ENCODE measurements at regions of chr13 and their contacts with region 1.

Region 1: DNA sequence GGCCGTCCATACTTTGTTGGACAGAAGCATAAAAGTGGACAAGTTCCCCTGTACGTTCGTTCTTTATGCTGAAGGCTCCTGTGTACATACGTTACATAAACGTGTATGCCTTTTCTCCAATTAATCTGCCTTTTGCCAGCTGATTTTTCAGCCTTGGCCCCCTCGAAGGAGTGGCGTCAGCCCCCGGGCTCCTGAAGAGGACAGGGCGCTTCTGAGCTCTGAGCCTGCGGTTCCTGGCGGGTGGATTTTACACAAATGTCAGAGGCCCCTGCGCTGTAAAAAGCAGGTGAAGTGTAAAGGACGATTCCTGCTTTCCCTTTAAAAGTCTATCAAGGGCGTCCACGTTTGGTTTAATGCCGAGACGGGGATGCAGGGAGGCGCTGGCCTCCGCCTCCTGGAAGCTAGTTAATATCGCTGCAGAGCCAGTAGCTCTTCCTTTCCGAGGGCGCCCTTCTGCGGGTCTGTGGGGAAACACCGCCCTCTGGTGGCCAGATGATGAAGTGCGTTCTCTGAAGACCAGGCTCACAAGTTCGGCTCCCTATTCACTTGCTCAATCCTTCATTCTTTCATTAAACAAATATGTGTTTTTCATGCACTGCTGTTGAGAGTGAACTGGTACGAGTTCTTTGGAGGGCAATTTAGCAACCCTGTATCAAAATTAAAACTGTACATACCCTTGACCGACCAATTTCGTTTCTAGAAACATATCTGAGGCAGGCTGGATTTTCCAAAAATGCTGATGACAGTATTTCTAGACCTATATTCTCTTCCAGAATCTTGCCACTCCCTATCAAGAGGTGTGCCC is 62.0 kb downstream of the GPR12 start:
- DNase-seq: peak; percentile 72 to 91 (median 87)
- H3K4me3 ChIP-seq: no peak overlapping the region
- H3K27ac ChIP-seq: no peak overlapping the region
- H3K4me1 ChIP-seq: no peaks in the 10 kb centered on the region
- H3K27me3 ChIP-seq: no peaks in the 10 kb centered on the region
- CTCF ChIP-seq: peak; percentile 88 to 93 (median 90)
- EP300 ChIP-seq: no peak
- POLR2A ChIP-seq: no peak

Region 2: GRCh38 chr13:24741016-24741662 is 1957.5 kb before region 1 on chr13:
- intact Hi-C with region 1: no loop called
- DNase-seq: no peak
- H3K4me3 ChIP-seq: no peak overlapping the region
- H3K27ac ChIP-seq: no peak overlapping the region
- H3K4me1 ChIP-seq: no peaks in the 10 kb centered on the region
- H3K27me3 ChIP-seq: no peaks in the 10 kb centered on the region
- CTCF ChIP-seq: no peak
- EP300 ChIP-seq: no peak
- POLR2A ChIP-seq: no peak

Region 3: GRCh38 chr13:26482451-26483197 is 216.0 kb before region 1 on chr13:
- intact Hi-C with region 1: loop called (anchors 5 kb)
- DNase-seq: peak in 4 of 5 donors; percentile 39 to 73 (median 53)
- H3K4me3 ChIP-seq: no peak overlapping the region
- H3K27ac ChIP-seq: no peak overlapping the region
- H3K4me1 ChIP-seq: no peaks in the 10 kb centered on the region
- H3K27me3 ChIP-seq: no peaks in the 10 kb centered on the region
- CTCF ChIP-seq: peak; percentile 56 to 78 (median 71)
- EP300 ChIP-seq: no peak
- POLR2A ChIP-seq: no peak

Region 4: DNA sequence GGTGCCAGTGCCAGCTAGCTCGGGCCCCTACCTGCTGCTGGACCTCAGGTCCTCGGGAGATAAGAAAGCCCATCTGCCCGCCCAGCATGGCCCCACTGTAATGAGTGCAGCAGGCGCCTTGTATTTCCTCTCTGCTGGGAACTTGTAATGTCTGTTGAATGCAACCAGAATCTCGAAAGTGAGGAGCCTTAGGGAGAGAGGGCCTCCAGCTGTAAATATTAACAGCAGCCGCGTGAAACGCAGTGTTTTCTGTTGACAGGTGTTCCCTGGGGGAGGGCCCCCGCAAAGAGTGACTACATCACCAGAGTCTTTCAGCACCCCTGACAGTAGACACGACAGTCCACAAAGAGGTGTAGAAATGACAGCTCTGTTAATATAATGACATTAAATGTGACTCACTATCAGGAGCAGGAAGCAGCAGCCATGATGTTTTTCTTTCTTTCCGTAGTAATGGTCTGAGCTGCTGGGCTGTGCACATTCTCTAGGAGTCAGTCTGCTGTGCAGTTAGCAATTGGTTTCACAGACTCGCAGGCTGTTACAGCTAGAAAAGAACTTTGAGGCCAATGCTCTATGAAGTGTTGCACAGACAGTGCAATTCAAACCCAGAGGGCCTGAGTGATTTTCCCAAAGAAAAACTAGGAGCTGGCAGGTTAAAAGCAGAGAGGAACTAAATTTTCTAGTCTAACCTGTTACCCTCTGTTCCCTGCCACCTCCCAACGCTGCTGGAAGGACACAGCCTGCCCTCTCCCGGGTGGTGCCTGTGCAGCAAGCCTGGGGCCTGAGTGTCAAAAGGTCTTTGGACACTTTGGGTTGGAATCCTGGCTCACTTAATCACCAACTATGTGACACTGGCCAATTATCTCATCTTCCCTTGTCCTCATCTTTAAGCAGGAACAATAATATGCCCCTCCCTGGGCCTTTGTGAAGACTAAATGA is 199.7 kb before region 1 on chr13:
- intact Hi-C with region 1: loop called in 1 of 4 experiments (anchors 5 kb)
- DNase-seq: no peak
- H3K4me3 ChIP-seq: no peak overlapping the region
- H3K27ac ChIP-seq: no peak overlapping the region
- H3K4me1 ChIP-seq: no peaks in the 10 kb centered on the region
- H3K27me3 ChIP-seq: no peaks in the 10 kb centered on the region
- CTCF ChIP-seq: no peak
- EP300 ChIP-seq: no peak
- POLR2A ChIP-seq: no peak

Measured in ovary (tissue), 10 donors.